BJ (cell line): ENCODE measurements at regions of chr20 and their contacts with region 1.

Region 1: GRCh38 chr20:41609474-41609873 is 8.7 kb downstream of the CHD6 start:
- DNase-seq: no peak
- H3K4me3 ChIP-seq: no peak overlapping the region
- H3K27me3 ChIP-seq: no peaks in the 10 kb centered on the region
- CTCF ChIP-seq: no peak

Region 2: DNA sequence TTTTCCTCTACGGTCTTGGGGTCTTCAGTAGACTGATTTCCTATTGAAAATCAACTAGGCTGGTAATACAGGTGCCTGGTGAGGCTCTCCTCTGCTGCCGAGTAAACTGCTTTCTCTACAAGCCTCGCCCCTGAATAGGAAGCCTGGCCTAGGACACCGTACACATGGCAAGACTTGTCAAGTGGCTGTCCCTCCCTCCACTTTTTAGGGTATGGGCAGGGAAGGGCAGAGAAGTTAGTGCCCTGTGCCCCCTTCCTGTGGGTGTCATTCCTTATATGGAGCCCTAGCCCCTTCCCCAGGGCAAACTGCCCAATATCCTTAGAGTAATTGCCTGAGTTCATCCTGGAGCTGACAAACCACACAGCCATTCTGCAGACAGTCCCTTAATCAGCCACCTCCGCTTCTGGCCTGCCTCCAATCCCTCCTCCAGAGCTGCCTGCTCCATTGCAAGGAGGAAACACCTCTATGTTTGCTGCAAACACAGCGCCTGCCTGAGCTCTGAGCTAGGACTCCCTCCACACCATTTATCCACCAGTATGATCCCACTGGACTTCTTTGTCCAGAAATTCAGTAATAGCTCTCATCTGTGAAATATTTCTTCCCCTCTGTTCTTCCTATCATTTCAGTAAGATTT is 84.4 kb before region 1 on chr20:
- CTCF ChIA-PET with region 1: no interaction called
- POLR2A ChIA-PET with region 1: interaction called, 11 read pairs
- DNase-seq: no peak
- H3K4me3 ChIP-seq: 0 out of 2 replicates have a peak overlapping the region, but pooled peaks have one; percentile 3
- H3K27me3 ChIP-seq: no peaks in the 10 kb centered on the region
- CTCF ChIP-seq: no peak

Region 3: DNA sequence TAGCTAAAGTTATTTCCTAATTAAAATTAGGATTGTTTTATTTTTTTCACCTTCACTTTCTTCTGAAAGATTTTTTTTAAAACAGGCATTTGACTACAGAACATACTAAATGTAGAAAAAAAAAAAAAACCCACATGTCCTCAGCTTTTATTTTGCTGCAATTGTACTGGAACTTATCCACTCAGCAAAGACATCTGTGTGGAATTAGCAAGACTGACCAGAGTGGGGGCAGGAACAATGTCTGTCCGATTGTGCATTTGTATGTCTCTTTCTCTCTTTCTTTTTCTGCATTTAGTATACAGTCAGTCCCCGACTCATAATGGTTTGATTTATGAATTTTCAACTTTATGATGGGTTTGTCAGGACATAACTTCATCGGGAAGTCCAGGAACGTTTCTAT is 68.6 kb before region 1 on chr20:
- CTCF ChIA-PET with region 1: no interaction called
- POLR2A ChIA-PET with region 1: interaction called, 19 read pairs
- DNase-seq: peak; percentile 15
- H3K4me3 ChIP-seq: no peak overlapping the region
- H3K27me3 ChIP-seq: no peaks in the 10 kb centered on the region
- CTCF ChIP-seq: no peak